Ascending aorta (tissue), 2 donors: ENCODE measurements at regions of chr2 and their contacts with region 1.

Region 1: DNA sequence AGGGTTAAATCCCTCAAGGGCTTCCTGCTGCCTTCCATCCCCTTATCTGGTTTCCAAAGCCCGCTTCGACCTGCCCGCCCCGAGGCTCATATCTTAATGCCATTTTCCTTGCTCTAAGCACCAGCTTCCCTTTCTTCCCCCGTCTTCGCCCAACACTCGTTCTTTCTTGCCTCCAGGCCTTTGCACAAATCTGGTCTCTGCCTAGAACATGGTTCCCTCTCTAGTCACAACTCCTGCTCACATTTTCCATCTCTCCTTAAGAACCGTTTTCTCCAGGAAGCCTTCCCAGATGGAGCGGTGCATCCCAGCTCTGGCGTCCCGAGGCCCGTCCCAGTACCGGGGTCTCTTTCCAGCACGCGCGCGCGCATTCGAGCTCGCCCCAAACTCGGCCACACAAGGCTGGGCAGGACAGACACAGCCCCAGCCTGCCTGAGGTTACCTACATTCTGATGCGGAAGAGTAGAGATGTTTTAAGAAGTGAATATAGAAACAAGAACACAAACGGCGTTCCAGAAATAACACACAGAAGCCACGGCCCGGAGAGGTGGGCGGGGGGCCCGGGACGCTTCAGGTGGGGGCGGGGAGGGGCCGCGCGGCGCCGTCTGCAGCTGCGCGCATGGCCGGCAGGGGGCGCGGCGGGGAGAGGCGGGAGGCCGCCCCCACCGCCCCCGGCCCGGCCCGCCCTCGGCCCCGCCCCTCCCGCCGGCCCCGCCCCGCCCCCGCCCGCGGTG is at the start of gene DGKD:
- DNase-seq: peak in 1 of 2 donors; percentile 68
- H3K4me3 ChIP-seq: peak within 1 kb of the TSS; percentile 77 to 78
- H3K27ac ChIP-seq: peak within 1 kb of the TSS in 1 of 2 donors; percentile 46
- H3K4me1 ChIP-seq: peaks cover 0 to 10% of the 10 kb centered on the region in 2 donors
- H3K27me3 ChIP-seq: no peaks in the 10 kb centered on the region
- CTCF ChIP-seq: peak in 2 of 3 experiments; percentile 33 to 51
- total RNA-seq, gene DGKD: 28.3 TPM

Region 2: GRCh38 chr2:233387667-233388528 is 34.0 kb after region 1 on chr2:
- intact Hi-C with region 1: loop called (anchors 1 kb)
- DNase-seq: peak; percentile 53 to 96
- H3K4me3 ChIP-seq: peak overlapping the region; percentile 18 to 54
- H3K27ac ChIP-seq: peak overlapping the region; percentile 78 to 84
- H3K4me1 ChIP-seq: peaks cover 11 to 25% of the 10 kb centered on the region in 2 donors
- H3K27me3 ChIP-seq: no peaks in the 10 kb centered on the region
- CTCF ChIP-seq: no peak

Region 3: DNA sequence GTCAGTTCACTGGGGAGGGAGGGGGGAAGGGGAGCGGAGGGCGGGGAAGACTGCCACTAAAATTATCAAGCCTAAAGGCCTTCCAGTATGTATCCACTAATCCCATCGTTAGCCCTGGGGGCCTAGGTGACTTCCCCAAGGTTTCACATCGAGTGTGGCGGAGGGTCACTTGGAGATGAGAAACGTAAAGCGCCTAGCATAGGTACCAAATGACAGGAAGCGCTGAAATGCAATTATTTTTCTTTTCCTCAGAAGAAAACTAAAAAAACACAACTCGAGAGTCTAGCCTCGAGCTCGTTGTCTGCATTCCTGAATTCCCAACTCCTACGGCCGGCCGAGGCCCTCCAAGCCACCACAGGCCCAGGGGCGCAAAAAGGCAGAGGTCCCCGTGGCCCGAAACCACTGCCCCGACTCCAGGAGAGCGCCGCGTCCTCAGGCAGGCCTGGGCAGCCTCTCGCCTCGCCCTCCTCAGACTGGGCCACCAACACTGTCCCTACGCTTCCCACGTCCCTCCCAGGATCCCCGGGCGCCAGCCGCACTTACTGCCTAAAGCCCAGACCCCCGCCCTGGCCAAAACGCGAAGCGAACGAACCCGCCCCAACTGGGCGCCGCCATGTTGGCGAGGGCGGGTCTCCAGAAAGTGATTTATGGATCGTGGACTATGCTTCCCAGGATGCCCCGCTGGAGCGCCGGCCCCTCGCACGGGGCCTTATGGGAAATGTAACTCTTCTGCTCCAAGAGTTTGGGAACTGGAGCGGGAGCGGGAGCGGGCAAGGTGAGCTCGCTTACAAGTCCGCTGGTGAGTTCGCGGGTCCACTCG is 212.4 kb after region 1 on chr2 and contains the start of gene USP40:
- intact Hi-C with region 1: loop called (anchors 5 kb)
- DNase-seq: peak; percentile 54 to 93
- H3K4me3 ChIP-seq: peak within 1 kb of the TSS; percentile 84 to 95
- H3K27ac ChIP-seq: peak within 1 kb of the TSS; percentile 91 to 92
- H3K4me1 ChIP-seq: peaks cover 0 to 5% of the 10 kb centered on the region in 2 donors
- H3K27me3 ChIP-seq: no peaks in the 10 kb centered on the region
- CTCF ChIP-seq: no peak
- total RNA-seq, gene USP40: 42.7 TPM